ENCODE measurements at regions of chr1 and their contacts with region 1.

Region 1: GRCh38 chr1:33367485-33368405 is 46.8 kb upstream of the A3GALT2 start:
- DNase-seq: peak; percentile 90
- ATAC-seq: peak; percentile 73 to 77

Region 2: DNA sequence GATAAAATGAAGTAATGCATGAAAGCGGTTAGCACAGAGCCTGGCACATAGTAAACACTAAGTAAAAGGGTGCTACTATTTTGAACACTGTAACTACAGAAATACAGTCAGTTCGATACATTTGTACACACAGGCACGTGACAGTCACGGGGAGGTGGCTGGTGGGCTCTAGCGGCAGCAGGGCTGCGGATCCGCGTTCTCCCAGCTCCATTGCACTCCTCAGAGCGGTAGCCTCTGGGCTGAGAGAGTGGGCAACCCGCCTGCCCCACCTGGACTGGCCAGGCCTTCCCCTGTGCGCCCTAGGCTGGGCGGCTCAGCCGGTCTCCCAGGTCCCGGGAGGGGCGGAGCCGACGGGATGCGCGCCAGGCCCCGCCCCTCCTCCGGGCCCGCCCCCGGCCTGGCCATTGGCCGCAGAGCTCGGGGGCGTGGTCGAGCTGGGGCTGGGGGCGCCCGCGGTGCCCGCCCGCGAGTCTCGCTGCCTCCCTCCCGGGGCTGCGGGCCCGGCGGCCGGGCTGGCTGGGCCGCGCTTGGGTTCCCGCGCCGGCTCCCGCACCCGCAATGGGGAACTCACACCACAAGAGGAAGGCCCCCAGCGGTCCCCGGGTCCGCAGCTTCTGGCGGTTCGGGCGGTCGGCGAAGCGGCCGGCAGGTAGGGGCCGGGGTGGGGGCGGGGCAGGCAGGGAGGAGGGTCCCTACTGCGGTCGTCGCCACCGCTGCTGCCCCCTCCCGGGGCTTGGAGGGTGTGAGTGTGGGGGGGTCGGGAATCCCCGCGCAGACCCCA is 614.0 kb before region 1 on chr1:
- intact Hi-C with region 1: no loop called
- DNase-seq: peak; percentile 72
- ATAC-seq: peak; percentile 94

Region 3: GRCh38 chr1:33455539-33456501 is 88.1 kb after region 1 on chr1:
- intact Hi-C with region 1: loop called in 1 of 2 experiments (anchors 5 kb)
- DNase-seq: peak; percentile 44
- ATAC-seq: peak; percentile 82 to 85

Region 4: GRCh38 chr1:33466159-33466558 is 98.4 kb after region 1 on chr1:
- intact Hi-C with region 1: loop called (anchors 5 kb)
- DNase-seq: peak; percentile 42
- ATAC-seq: peak; percentile 24 to 26

Region 5: DNA sequence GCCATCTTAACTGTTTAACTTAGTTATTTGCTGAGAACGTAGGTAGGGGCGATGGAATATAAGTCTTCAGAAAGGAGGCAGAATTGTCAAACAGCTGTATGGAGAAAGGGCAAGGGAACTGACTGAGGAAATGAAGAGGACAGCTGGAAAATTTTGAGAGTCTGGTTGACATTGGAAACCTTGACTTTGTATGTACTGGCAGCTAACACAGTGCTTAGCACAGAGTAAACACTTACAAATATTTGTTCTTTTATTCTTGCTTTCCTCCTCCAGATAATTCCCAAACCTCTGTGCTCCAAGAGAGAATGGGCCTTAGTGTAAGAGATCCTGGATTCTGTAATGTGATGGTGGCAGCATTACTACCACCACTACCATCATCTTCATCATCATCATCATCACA is 196.0 kb after region 1 on chr1:
- intact Hi-C with region 1: no loop called
- DNase-seq: no peak
- ATAC-seq: peak; percentile 59 to 75

Measured in left cardiac atrium (tissue), 4 donors.